PC-3 (cell line): ENCODE measurements at regions of chr9 and their contacts with region 1.

Region 1: DNA sequence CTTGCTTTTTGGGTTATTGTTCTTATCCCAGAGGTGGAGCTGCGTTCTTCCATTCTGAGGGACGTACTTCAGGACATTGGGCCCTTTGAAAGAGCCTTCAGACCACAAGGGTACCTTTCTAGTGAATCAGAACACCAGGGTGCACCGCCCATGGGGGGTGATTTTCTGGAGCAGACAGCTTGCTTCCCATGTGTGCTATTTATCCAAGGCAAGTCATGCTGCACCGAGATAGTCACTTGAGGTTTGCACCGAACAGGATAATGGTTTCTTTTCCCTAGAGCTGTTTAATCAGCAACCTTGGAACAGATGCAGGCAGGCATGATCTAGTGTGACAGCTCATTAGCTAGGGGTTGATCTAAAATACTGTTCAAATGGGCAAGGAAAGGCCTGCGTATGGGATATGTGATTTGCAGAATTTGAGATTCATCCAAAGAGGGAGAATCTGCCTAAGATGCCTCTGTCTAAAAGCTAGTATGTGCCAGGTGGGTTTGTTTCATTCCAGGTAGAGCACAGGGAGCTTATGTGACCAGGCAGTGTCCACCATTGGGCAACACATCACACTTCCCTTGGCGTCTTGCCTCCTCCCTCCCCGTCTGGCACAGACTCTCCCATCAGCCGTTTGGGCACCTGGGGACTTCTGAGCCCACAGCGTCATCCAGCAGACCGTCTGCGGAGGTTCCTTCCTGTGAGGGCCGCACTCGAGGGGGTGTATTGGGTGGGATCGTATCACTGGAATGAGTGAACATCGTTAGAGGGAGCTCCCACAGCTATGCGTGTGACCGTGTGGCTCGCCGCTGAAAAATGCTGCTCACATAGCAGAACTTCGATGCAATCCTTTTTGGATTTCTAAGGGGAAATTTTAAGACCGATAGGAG is 23.0 kb downstream of the ABL1 start:
- DNase-seq: peak; percentile 15
- ATAC-seq: no peak
- H3K4me3 ChIP-seq: no peak overlapping the region
- H3K27ac ChIP-seq: no peak overlapping the region
- H3K4me1 ChIP-seq: no peaks in the 10 kb centered on the region; the same call in 1 of the 2 replicates
- H3K27me3 ChIP-seq: no peaks in the 10 kb centered on the region
- CTCF ChIP-seq: no peak

Region 2: GRCh38 chr9:130707225-130707976 is 150.7 kb before region 1 on chr9:
- CTCF ChIA-PET with region 1: no interaction called
- POLR2A ChIA-PET with region 1: no interaction called
- intact Hi-C with region 1: loop called (anchors 1 kb)
- DNase-seq: peak; percentile 63
- ATAC-seq: peak; percentile 70
- H3K4me3 ChIP-seq: no peak overlapping the region
- H3K27ac ChIP-seq: no peak overlapping the region
- H3K4me1 ChIP-seq: no peaks in the 10 kb centered on the region
- H3K27me3 ChIP-seq: no peaks in the 10 kb centered on the region
- CTCF ChIP-seq: peak; percentile 87

Region 3: DNA sequence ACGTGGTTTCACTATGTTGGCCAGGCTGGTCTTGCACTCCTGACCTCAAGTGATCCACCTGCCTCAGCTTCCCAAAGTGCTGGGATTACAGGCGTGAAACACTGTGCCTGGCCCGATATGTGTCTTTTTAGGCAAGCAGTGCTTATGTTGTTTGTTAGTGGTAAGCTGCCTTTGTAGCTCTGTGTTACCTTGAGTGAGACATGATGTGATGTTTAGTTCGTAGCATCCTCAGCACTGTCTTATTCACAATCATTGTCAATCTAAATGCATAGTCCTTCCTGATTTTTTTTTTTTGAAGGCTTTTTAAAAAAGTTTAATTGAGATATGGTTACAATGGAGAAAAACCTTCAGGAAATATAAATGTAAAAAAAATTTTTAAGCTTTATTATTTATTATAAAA is 119.0 kb before region 1 on chr9:
- CTCF ChIA-PET with region 1: interaction called, 13 read pairs
- POLR2A ChIA-PET with region 1: no interaction called
- intact Hi-C with region 1: no loop called
- DNase-seq: no peak
- ATAC-seq: no peak
- H3K4me3 ChIP-seq: no peak overlapping the region
- H3K27ac ChIP-seq: no peak overlapping the region
- H3K4me1 ChIP-seq: peaks cover 7% of the 10 kb centered on the region; the same call in 1 of the 2 replicates
- H3K27me3 ChIP-seq: no peaks in the 10 kb centered on the region
- CTCF ChIP-seq: no peak

Region 4: DNA sequence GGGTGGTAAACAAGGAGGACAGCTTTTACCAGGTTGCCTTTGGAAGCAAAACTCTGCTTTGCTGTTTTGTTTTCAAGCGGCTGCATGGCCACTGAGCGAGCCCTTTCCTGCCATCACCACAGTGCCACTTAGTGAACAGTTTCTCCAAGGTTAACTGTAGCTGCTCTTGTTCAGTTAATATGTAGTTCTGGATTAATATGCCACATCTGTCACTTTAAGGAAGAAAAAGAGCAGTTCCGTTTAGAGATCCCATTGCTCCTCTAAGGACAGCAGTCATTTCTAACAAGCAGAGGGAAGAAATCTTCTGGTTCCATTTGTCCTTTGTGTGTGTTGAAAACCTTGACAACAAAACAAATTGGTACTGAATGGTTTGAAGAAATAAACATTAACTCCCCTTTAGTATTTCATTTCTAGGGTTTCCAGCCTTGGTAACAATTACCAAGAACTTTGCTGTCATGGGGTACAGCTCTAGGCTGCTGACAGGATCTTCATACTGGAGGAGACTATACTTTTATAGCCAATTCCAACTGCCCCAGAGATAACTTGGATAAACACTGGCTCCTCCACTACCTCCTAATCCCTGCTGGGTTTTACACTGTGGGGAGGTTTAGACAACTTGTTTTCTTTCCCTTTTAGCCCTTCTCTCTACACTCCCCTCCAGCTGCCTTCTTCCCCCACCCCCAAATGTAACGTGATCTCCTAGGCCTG is 33.3 kb before region 1 on chr9:
- CTCF ChIA-PET with region 1: no interaction called
- POLR2A ChIA-PET with region 1: no interaction called
- intact Hi-C with region 1: no loop called
- DNase-seq: peak; percentile 23
- ATAC-seq: peak; percentile 49
- H3K4me3 ChIP-seq: no peak overlapping the region
- H3K27ac ChIP-seq: no peak overlapping the region
- H3K4me1 ChIP-seq: peaks cover 12% of the 10 kb centered on the region
- H3K27me3 ChIP-seq: no peaks in the 10 kb centered on the region
- CTCF ChIP-seq: no peak

Region 5: GRCh38 chr9:130927995-130928900 is 70.1 kb after region 1 on chr9:
- CTCF ChIA-PET with region 1: no interaction called
- POLR2A ChIA-PET with region 1: no interaction called
- intact Hi-C with region 1: no loop called
- DNase-seq: peak; percentile 92
- ATAC-seq: peak; percentile 70
- H3K4me3 ChIP-seq: peak overlapping the region; percentile 64
- H3K27ac ChIP-seq: peak overlapping the region; percentile 100
- H3K4me1 ChIP-seq: peaks cover 40% of the 10 kb centered on the region
- H3K27me3 ChIP-seq: no peaks in the 10 kb centered on the region
- CTCF ChIP-seq: no peak